Motor neuron (in vitro differentiated cells): ENCODE measurements at regions of chr20 and their contacts with region 1.

Region 1: DNA sequence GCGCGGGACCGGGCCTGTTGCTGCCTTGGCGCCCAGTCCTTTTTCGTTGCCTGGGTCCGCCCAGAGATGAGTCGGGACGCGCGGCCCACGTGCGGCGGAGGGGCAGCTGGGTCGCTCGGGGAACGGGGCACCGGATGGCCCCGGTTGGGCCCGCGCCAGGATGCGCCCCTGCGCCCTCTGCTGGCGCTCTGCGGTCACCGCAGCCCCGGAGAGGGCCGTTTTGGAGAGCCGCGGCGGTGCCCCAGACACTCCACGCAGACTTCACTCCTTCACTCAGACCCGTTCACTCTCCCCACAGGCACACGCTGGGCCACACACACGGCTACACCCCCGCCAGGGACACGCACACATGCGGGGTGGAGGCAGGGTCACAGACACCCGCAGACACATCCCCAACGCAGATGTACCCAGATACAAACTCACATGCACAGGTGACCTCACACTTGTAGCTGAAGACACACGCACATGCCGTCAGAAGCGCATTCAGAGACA is 38.8 kb downstream of the SRC start:
- ATAC-seq: peak; percentile 73 to 92 (median 88)
- H3K4me3 ChIP-seq: no peak overlapping the region
- H3K27ac ChIP-seq: no peak overlapping the region
- H3K4me1 ChIP-seq: peaks cover 0 to 3% of the 10 kb centered on the region in 2 donors

Region 2: GRCh38 chr20:37276494-37277252 is 108.1 kb before region 1 on chr20:
- in situ Hi-C with region 1: loop called in 2 of 9 experiments (anchors 10 to 25 kb)
- ATAC-seq: peak in 3 of 8 experiments; percentile 95 to 98 (median 96)
- H3K4me3 ChIP-seq: no peak overlapping the region
- H3K27ac ChIP-seq: no peak overlapping the region
- H3K4me1 ChIP-seq: peaks cover 3 to 5% of the 10 kb centered on the region in 2 donors

Region 3: DNA sequence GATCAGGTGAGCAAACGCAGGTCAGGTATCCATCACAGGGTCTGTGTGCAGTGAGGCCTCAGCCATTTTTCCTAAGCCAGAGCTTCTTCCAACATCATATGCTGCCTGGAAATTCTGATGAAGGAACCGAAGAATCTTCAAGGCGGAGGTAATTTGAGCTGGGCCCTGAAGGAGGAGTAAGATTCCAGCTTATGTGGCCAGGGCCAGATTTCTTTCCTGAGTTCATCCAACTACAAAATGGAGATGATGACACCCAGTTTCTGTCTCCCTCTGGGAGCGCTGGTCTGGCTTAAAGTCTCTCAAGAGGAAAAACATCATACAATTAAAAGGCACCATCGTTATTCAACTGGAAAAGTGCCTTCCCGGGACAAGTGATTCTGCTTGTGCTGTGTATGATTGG is 102.2 kb before region 1 on chr20:
- in situ Hi-C with region 1: loop called in 2 of 9 experiments (anchors 10 to 25 kb)
- ATAC-seq: peak in 4 of 8 experiments; percentile 35 to 93 (median 92)
- H3K4me3 ChIP-seq: no peak overlapping the region
- H3K27ac ChIP-seq: no peak overlapping the region
- H3K4me1 ChIP-seq: peaks cover 6 to 8% of the 10 kb centered on the region in 2 donors